A673 (cell line): ENCODE measurements at regions of chr7 and their contacts with region 1.

Region 1: GRCh38 chr7:98294796-98295382 is 13.4 kb downstream of the BRI3 start:
- DNase-seq: peak; percentile 72
- H3K4me3 ChIP-seq: no peak overlapping the region
- H3K27ac ChIP-seq: no peak overlapping the region
- H3K4me1 ChIP-seq: peaks cover 9% of the 10 kb centered on the region
- H3K27me3 ChIP-seq: no peaks in the 10 kb centered on the region
- CTCF ChIP-seq: peak; percentile 79

Region 2: GRCh38 chr7:98400542-98401340 is 105.9 kb after region 1 on chr7 and contains the start of gene BAIAP2L1:
- CTCF ChIA-PET with region 1: no interaction called
- POLR2A ChIA-PET with region 1: no interaction called
- intact Hi-C with region 1: loop called (anchors 1 kb)
- DNase-seq: peak; percentile 67
- H3K4me3 ChIP-seq: peak within 1 kb of the TSS; percentile 56
- H3K27ac ChIP-seq: no peak within 1 kb of the TSS
- H3K4me1 ChIP-seq: no peaks in the 10 kb centered on the region
- H3K27me3 ChIP-seq: peaks cover 6% of the 10 kb centered on the region
- CTCF ChIP-seq: no peak; the same call in 1 of the 2 replicates
- total RNA-seq, gene BAIAP2L1: 0.77 and 0.92 TPM in 2 replicates

Region 3: GRCh38 chr7:98745722-98746318 is 450.9 kb after region 1 on chr7:
- CTCF ChIA-PET with region 1: no interaction called
- POLR2A ChIA-PET with region 1: no interaction called
- intact Hi-C with region 1: loop called (anchors 10 kb)
- DNase-seq: peak; percentile 75
- H3K4me3 ChIP-seq: no peak overlapping the region
- H3K27ac ChIP-seq: no peak overlapping the region
- H3K4me1 ChIP-seq: no peaks in the 10 kb centered on the region
- H3K27me3 ChIP-seq: peaks cover 15% of the 10 kb centered on the region
- CTCF ChIP-seq: peak; percentile 95